Transverse colon (tissue), 4 donors: ENCODE measurements at regions of chr3 and their contacts with region 1.

Region 1: DNA sequence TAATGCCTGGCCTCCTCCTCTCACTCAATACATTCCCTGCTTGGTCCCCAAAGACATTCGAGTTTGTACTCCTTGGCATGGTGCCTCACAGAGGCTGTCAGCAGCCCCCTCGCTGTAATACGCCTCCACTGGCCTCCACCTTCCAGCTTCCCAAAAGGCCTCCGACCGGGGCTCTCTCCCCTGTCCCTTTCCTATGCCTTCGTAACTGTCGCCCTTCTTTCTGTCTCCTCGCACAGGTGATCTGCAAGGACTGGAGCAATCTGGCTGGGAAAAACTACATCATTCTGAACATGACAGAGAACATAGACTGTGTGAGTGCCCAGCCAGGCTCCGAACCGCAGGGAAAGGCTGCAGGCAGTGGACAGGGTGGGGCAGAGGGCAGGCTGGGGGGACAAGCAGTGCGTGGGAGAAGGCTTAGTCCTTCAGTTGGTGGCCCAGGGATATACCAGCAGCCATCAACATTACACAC is 10.7 kb upstream of the ABTB1 start:
- DNase-seq: no peak
- H3K4me3 ChIP-seq: no peak overlapping the region
- H3K27ac ChIP-seq: no peak overlapping the region
- H3K4me1 ChIP-seq: no peaks in the 10 kb centered on the region
- H3K27me3 ChIP-seq: no peaks in the 10 kb centered on the region
- CTCF ChIP-seq: no peak
- EP300 ChIP-seq: no peak
- POLR2A ChIP-seq: no peak

Region 2: DNA sequence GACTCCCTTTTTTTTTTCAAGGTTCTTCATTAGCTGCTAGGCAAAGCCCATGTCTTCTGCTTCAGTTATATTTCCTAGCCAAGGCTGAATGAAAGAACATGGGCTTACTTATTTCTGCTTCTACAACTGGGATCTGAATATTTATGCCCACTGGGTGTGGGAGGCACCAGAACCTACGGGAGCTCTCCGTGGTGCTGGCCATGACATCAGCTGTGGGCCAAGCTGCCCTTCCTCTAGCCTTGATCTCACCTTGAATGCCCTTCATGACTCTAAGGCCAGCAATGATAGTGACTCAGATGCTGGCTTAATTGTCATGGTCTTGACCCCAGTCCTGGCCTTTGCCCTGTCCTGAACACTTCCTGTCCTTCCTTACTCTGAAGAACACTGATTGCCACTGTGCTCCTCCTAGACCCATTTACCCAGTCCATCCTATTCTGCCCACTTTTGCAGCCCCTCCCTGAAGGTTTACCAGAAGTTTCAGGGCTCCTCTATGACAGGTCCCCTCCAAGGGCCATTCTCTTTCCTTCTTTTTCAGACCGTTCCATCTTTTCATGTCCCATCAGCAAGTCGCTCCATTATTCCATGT is 341.4 kb before region 1 on chr3:
- in situ Hi-C with region 1: no loop called
- intact Hi-C with region 1: no loop called
- DNase-seq: no peak
- H3K4me3 ChIP-seq: no peak overlapping the region
- H3K27ac ChIP-seq: no peak overlapping the region
- H3K4me1 ChIP-seq: no peaks in the 10 kb centered on the region
- H3K27me3 ChIP-seq: no peaks in the 10 kb centered on the region
- CTCF ChIP-seq: no peak
- EP300 ChIP-seq: no peak
- POLR2A ChIP-seq: no peak

Region 3: GRCh38 chr3:127351321-127351720 is 310.7 kb before region 1 on chr3:
- in situ Hi-C with region 1: no loop called
- intact Hi-C with region 1: no loop called
- DNase-seq: no peak
- H3K4me3 ChIP-seq: no peak overlapping the region
- H3K27ac ChIP-seq: no peak overlapping the region
- H3K4me1 ChIP-seq: no peaks in the 10 kb centered on the region
- H3K27me3 ChIP-seq: peaks cover 34% of the 10 kb centered on the region
- CTCF ChIP-seq: no peak
- EP300 ChIP-seq: no peak
- POLR2A ChIP-seq: no peak

Region 4: GRCh38 chr3:127735767-127736704 is 74.0 kb after region 1 on chr3:
- in situ Hi-C with region 1: no loop called
- intact Hi-C with region 1: no loop called
- DNase-seq: peak; percentile 41
- H3K4me3 ChIP-seq: no peak overlapping the region
- H3K27ac ChIP-seq: peak overlapping the region; percentile 42 to 84 (median 68)
- H3K4me1 ChIP-seq: peaks cover 27 to 74% (median 53%) of the 10 kb centered on the region in 4 donors
- H3K27me3 ChIP-seq: no peaks in the 10 kb centered on the region
- CTCF ChIP-seq: no peak
- EP300 ChIP-seq: no peak
- POLR2A ChIP-seq: no peak

Region 5: GRCh38 chr3:127970966-127971592 is 309.0 kb after region 1 on chr3:
- in situ Hi-C with region 1: loop called (anchors 5 to 25 kb)
- intact Hi-C with region 1: no loop called
- DNase-seq: peak; percentile 29
- H3K4me3 ChIP-seq: no peak overlapping the region
- H3K27ac ChIP-seq: no peak overlapping the region
- H3K4me1 ChIP-seq: peaks cover 0 to 8% (median 0%) of the 10 kb centered on the region in 4 donors
- H3K27me3 ChIP-seq: peaks cover 11% of the 10 kb centered on the region
- CTCF ChIP-seq: peak; percentile 59 to 70 (median 70)
- EP300 ChIP-seq: no peak
- POLR2A ChIP-seq: no peak